ENCODE measurements at regions of chr5 and their contacts with region 1.

Region 1: GRCh38 chr5:6765612-6766525 is 52.6 kb downstream of the TENT4A start:
- DNase-seq: peak; percentile 57
- ATAC-seq: peak; percentile 80
- H3K4me3 ChIP-seq: peak overlapping the region; percentile 1 to 44; a peak in 2 of 4 replicates
- H3K27ac ChIP-seq: peak overlapping the region; percentile 85
- H3K4me1 ChIP-seq: peaks cover 27% of the 10 kb centered on the region
- H3K27me3 ChIP-seq: no peaks in the 10 kb centered on the region
- CTCF ChIP-seq: peak; percentile 94

Region 2: GRCh38 chr5:7078901-7079300 is 313.0 kb after region 1 on chr5:
- CTCF ChIA-PET with region 1: no interaction called
- POLR2A ChIA-PET with region 1: no interaction called
- in situ Hi-C with region 1: no loop called
- intact Hi-C with region 1: loop called (anchors 5 kb)
- DNase-seq: peak; percentile 4
- ATAC-seq: no peak
- H3K4me3 ChIP-seq: no peak overlapping the region
- H3K27ac ChIP-seq: no peak overlapping the region
- H3K4me1 ChIP-seq: no peaks in the 10 kb centered on the region
- H3K27me3 ChIP-seq: no peaks in the 10 kb centered on the region
- CTCF ChIP-seq: peak; percentile 50